Naive thymus-derived CD4-positive, alpha-beta T cell (primary cell): ENCODE measurements at regions of chr14 and their contacts with region 1.

Region 1: GRCh38 chr14:98189062-98189461 is 1082.9 kb downstream of the BCL11B start:
- DNase-seq: peak in 1 of 9 donors; percentile 50
- ATAC-seq: peak; percentile 40
- H3K4me3 ChIP-seq: peak overlapping the region; percentile 48
- H3K4me3 Mint-ChIP-seq: peak overlapping the region; percentile 63 to 86 (median 76)
- H3K27ac ChIP-seq: peak overlapping the region; percentile 80
- H3K27ac Mint-ChIP-seq: peak overlapping the region; percentile 92 to 100 (median 98)
- H3K4me1 ChIP-seq: peaks cover 82 to 95% of the 10 kb centered on the region in 2 donors
- H3K4me1 Mint-ChIP-seq: peaks cover 56 to 100% (median 98%) of the 10 kb centered on the region in 7 donors
- H3K27me3 ChIP-seq: no peaks in the 10 kb centered on the region
- H3K27me3 Mint-ChIP-seq: no peaks in the 10 kb centered on the region

Region 2: DNA sequence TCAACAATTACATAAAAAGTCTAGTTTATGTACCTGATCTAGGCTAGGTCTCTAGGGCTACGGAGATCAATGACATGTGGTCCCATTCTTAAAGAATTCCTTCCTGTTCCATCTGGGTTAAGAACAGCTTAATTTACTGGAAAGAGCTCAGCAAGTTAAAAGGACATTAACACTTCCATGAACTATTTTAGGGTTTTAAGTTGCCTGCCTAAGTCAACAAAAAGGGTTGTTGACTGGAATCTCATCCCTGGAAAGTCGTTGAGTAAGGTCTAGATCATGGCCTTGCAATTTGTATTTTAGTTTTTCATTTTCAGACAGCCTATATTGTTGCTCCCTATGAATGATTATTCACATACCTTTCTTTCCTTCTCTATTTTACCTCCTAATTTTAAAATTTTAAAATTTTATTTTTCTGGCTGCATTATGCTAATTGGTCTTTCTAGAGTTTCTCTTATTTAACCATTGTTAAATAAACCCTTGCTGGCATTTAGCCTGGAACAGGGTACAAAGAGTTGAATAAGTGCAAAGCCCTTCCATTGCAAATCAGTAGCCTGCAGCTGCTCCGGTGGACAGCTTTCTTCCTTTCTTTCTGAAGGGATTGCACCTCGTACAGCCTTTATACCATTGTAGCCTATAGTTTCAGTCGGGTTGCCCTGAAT is 1325.6 kb before region 1 on chr14:
- CTCF ChIA-PET with region 1: no interaction called
- POLR2A ChIA-PET with region 1: no interaction called
- intact Hi-C with region 1: no loop called
- DNase-seq: no peak
- ATAC-seq: no peak
- H3K4me3 ChIP-seq: no peak overlapping the region
- H3K4me3 Mint-ChIP-seq: no peak overlapping the region
- H3K27ac ChIP-seq: no peak overlapping the region
- H3K27ac Mint-ChIP-seq: no peak overlapping the region
- H3K4me1 ChIP-seq: no peaks in the 10 kb centered on the region
- H3K4me1 Mint-ChIP-seq: peaks cover 0 to 13% (median 7%) of the 10 kb centered on the region in 7 donors
- H3K27me3 ChIP-seq: no peaks in the 10 kb centered on the region
- H3K27me3 Mint-ChIP-seq: no peaks in the 10 kb centered on the region

Region 3: DNA sequence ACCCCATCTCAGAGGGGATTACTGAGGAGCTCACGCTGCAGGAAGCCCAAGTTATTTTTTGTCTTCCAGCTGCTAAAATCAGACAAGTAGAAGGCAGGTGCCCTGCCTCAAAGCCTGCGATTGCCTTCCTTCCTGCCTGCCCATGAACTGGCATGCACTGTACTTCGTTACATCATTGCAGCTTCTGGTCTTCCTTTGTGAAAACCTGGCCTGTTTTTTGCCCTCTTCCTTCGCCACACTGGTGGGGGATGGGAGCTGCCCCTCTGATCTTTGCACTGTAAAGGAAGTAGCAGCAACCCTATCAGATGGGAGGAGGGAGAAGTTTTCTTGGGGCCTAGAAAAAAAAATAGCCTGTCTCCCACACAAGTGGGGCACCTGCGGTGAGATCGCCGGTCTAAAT is 15.8 kb before region 1 on chr14:
- CTCF ChIA-PET with region 1: interaction called, 28 read pairs
- POLR2A ChIA-PET with region 1: interaction called, 413 read pairs
- intact Hi-C with region 1: loop called (anchors 1 kb)
- DNase-seq: peak in 7 of 9 donors; percentile 71 to 84 (median 82)
- ATAC-seq: peak; percentile 78
- H3K4me3 ChIP-seq: peak overlapping the region; percentile 33
- H3K4me3 Mint-ChIP-seq: peak overlapping the region; percentile 74 to 90 (median 84)
- H3K27ac ChIP-seq: peak overlapping the region; percentile 81
- H3K27ac Mint-ChIP-seq: peak overlapping the region; percentile 89 to 100 (median 97)
- H3K4me1 ChIP-seq: peaks cover 100% of the 10 kb centered on the region in 2 donors
- H3K4me1 Mint-ChIP-seq: peaks cover 59 to 100% (median 99%) of the 10 kb centered on the region in 7 donors
- H3K27me3 ChIP-seq: no peaks in the 10 kb centered on the region
- H3K27me3 Mint-ChIP-seq: no peaks in the 10 kb centered on the region

Region 4: DNA sequence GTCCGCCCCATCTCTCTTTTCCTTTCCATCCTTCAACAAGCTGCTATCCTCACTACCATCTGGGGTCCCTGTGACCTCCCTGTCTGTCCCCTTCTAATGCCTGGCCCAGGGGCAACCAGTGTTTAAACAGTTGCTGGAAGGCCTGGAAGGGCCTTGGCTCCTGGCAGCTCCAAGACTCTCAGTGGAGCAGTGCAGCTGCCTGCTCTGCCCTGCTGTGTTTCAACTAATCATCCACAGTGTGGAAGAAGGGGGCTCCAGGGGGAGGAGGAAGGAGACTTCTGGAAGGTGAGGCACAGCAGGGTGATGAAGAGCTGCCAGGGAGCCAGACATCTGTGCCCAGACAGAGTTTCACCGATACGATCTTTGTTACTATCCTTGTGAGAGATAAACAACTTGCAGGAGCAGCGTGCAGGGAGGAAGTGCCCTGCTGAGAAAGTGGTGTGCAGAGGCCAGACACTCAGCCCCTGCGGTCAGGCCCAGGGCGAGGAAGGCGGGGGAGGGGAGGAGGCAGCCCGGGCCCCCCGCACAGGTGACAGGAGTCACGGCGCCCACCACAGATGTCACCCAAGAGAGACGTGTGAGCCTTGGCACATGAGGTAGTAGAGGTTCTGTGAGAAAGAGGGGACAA is 21.1 kb after region 1 on chr14:
- CTCF ChIA-PET with region 1: interaction called, 16 read pairs
- POLR2A ChIA-PET with region 1: interaction called, 15 read pairs
- intact Hi-C with region 1: loop called in 1 of 2 experiments (anchors 2 kb)
- DNase-seq: peak in 5 of 9 donors; percentile 36 to 58 (median 50)
- ATAC-seq: peak; percentile 68
- H3K4me3 ChIP-seq: peak overlapping the region; percentile 34
- H3K4me3 Mint-ChIP-seq: peak overlapping the region; percentile 65 to 86 (median 74)
- H3K27ac ChIP-seq: peak overlapping the region; percentile 83
- H3K27ac Mint-ChIP-seq: peak overlapping the region; percentile 91 to 100 (median 97)
- H3K4me1 ChIP-seq: peaks cover 44 to 82% of the 10 kb centered on the region in 2 donors
- H3K4me1 Mint-ChIP-seq: peaks cover 0 to 95% (median 57%) of the 10 kb centered on the region in 7 donors
- H3K27me3 ChIP-seq: no peaks in the 10 kb centered on the region
- H3K27me3 Mint-ChIP-seq: peaks cover 0 to 1% (median 0%) of the 10 kb centered on the region in 5 donors

Region 5: DNA sequence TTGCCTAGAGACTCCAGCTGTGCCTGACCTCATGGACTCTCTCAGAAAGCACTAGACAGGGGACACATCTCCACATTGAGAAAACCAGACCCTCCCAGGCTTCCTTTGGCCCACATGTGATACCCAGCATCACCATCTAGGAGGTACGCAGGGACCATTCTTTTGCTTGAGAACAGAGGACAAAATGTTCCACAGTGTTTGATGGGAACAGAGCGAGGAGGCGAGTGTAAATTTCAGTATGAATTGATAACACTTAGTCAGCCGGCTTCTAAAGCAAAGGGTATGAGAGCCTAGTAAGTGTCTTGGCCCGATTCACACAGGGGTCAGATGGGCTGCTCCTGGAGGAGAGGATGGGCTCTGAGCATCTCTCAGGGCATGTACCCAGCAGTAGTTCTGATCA is 30.6 kb after region 1 on chr14:
- CTCF ChIA-PET with region 1: no interaction called
- POLR2A ChIA-PET with region 1: interaction called, 6 read pairs
- intact Hi-C with region 1: loop called (anchors 1 kb)
- DNase-seq: no peak
- ATAC-seq: no peak
- H3K4me3 ChIP-seq: no peak overlapping the region
- H3K4me3 Mint-ChIP-seq: peak overlapping the region in 4 of 10 donors; percentile 2 to 49 (median 33)
- H3K27ac ChIP-seq: no peak overlapping the region
- H3K27ac Mint-ChIP-seq: peak overlapping the region in 4 of 9 donors; percentile 60 to 83 (median 71)
- H3K4me1 ChIP-seq: peaks cover 32 to 76% of the 10 kb centered on the region in 2 donors
- H3K4me1 Mint-ChIP-seq: peaks cover 26 to 49% (median 29%) of the 10 kb centered on the region in 7 donors
- H3K27me3 ChIP-seq: no peaks in the 10 kb centered on the region
- H3K27me3 Mint-ChIP-seq: no peaks in the 10 kb centered on the region

Region 6: GRCh38 chr14:98931911-98932310 is 742.8 kb after region 1 on chr14:
- CTCF ChIA-PET with region 1: no interaction called
- POLR2A ChIA-PET with region 1: no interaction called
- intact Hi-C with region 1: loop called in 1 of 2 experiments (anchors 5 kb)
- DNase-seq: peak; percentile 31 to 90 (median 88)
- ATAC-seq: peak; percentile 97
- H3K4me3 ChIP-seq: peak overlapping the region; percentile 40
- H3K4me3 Mint-ChIP-seq: peak overlapping the region; percentile 66 to 92 (median 80)
- H3K27ac ChIP-seq: peak overlapping the region; percentile 66
- H3K27ac Mint-ChIP-seq: peak overlapping the region; percentile 82 to 98 (median 94)
- H3K4me1 ChIP-seq: peaks cover 31 to 76% of the 10 kb centered on the region in 2 donors
- H3K4me1 Mint-ChIP-seq: peaks cover 51 to 100% (median 99%) of the 10 kb centered on the region in 7 donors
- H3K27me3 ChIP-seq: no peaks in the 10 kb centered on the region
- H3K27me3 Mint-ChIP-seq: peaks cover 0 to 2% (median 0%) of the 10 kb centered on the region in 5 donors